Dorsolateral prefrontal cortex (tissue), 120 donors: ENCODE measurements at regions of chr4 and their contacts with region 1.

Region 1: DNA sequence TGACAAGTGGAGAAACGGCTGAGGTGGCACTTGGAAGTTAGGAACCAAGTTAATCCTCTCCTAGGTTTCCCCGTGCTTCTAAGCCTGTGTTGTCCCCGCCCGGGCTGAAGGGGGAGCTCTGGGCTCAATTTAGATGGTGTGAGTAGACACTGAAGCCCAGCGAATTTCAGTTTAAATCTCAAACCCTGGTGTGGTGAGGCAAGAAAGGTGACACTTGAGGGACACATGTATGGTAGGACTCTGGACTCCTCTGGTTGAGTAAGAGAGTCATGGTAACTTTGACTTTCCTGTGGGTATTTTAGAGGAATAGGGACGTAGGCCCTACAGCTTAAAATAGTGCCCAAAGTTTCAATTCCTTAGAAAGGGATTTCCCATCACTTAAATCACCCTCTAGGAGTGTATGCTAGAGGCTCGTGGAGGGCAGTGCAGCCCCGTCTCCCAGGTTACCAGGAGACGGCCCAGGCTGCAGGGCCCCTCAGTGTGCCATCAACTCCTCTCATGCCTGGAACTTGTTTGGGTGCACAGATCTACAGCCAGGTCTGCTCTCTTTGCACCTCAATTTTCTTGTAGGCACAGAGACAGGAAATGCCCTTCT is 24.0 kb downstream of the HAND2 start:
- DNase-seq: peak in 3 of 10 donors; percentile 35 to 58 (median 44)
- H3K4me3 ChIP-seq: peak overlapping the region in 4 of 59 donors; percentile 21 to 35 (median 29)
- H3K27ac ChIP-seq: no peak overlapping the region
- H3K27me3 ChIP-seq: peaks cover 13 to 100% (median 100%) of the 10 kb centered on the region in 45 donors
- CTCF ChIP-seq: peak in 50 of 56 donors; percentile 16 to 68 (median 50)

Region 2: DNA sequence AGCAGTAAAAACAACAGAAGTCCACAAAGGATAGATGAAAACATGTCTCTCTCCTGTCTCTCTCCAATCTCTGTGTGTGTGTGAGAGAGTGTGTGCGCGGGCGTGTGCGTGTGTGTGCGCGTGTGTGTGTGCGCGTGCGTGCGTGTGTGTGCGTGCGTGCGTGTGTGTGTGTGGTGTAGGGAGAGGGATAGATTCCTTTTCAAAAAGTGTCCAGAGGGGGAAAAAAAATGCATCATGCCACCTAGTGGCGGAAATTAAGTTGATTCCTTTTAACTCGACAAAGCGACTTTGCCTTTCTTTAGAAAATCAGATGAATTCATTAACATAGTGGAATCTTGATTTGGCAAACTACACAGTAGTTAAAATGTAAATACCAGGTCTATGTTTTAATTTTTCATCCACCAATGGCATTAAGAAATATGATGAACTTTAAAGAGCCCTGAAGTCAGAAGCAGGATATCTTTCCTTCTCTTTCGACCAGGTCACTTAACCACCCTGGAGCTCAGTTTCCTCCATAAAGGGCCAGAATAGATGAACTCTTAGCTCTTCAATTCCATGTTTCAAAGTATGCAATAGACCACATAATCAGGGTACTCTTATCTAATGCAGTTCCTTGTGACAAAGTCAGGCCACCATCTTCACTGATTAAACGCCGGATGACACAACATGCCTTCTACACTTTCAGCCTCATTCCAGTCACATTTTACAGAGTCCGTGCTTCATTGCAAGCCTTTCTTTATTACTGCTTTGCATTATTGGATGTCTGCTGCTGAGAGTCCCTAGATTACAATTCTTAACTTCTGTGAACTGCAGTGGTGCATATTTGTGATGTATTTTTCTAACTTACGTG is 614.6 kb after region 1 on chr4:
- intact Hi-C with region 1: loop called in 1 of 2 experiments (anchors 10 kb)
- DNase-seq: peak in 6 of 10 donors; percentile 7 to 39 (median 37)
- H3K4me3 ChIP-seq: peak overlapping the region in 50 of 59 donors; percentile 4 to 66 (median 40)
- H3K27ac ChIP-seq: no peak overlapping the region
- H3K27me3 ChIP-seq: peaks cover 0 to 67% (median 18%) of the 10 kb centered on the region in 45 donors
- CTCF ChIP-seq: peak; percentile 30 to 72 (median 58)

Region 3: DNA sequence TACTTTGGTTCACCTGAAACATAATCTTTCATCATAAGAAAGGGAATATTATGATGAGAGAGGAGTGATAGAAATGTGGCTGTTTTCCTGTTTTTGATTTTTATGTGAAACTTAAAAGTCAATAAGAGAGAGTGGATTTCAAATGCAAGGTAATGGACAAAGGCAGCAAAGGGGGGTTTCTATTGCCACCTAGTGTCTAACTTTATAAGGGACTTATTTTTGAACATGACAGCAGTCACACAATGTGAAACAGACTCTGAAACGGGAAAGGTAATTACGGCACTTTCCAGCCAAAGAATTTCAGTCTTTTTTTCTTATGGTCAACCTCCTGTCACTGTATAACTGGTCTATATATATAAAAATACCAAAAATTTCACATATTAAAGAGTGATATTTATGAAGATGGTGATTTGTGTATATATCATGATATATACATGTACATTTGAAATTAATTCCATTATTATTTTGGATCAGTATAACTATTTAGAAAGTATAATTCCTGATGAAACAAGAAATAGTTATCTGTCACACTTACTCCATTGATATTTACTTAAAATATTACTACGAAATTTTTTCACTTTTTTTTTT is 650.3 kb after region 1 on chr4:
- intact Hi-C with region 1: loop called in 1 of 2 experiments (anchors 5 kb)
- DNase-seq: no peak
- H3K4me3 ChIP-seq: no peak overlapping the region
- H3K27ac ChIP-seq: no peak overlapping the region
- H3K27me3 ChIP-seq: peaks cover 0 to 38% (median 0%) of the 10 kb centered on the region in 45 donors
- CTCF ChIP-seq: peak; percentile 28 to 74 (median 60)